Aorta (tissue), 5 donors: ENCODE measurements at regions of chr17 and their contacts with region 1.

Region 1: DNA sequence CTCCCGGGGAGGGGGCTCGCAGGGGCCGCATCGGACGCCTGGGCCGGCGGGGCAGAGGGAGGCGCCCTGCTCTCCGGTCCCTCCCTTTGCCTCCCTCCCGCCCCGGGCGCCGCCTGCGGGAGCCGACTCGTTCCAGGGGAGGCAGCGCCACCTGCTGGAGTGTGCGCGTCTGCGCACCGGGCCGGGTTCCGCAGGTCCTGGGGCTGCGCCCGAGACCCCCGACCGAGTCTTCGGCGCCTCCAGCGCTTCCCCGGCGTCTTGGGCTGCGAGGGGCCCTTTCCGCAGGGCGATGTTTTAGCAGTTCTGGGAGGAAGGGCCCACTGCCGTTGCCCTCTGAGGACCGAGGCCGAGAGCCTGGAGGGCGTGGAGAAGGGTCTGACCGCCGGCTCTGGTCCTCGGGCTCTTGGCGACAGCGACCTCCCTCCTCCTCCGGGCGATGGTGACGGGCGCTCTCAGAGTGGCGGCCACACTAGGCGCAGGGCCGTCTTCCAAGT is 106.3 kb downstream of the SEC14L1 start:
- DNase-seq: peak; percentile 91 to 96
- ATAC-seq: peak; percentile 94
- H3K4me3 ChIP-seq: peak overlapping the region; percentile 15 to 35
- H3K27ac ChIP-seq: no peak overlapping the region
- H3K4me1 ChIP-seq: no peaks in the 10 kb centered on the region
- H3K27me3 ChIP-seq: no peaks in the 10 kb centered on the region

Region 2: GRCh38 chr17:76862494-76862893 is 384.6 kb before region 1 on chr17:
- intact Hi-C with region 1: loop called in 1 of 2 experiments (anchors 5 kb)
- DNase-seq: no peak
- ATAC-seq: no peak
- H3K4me3 ChIP-seq: no peak overlapping the region
- H3K27ac ChIP-seq: no peak overlapping the region
- H3K4me1 ChIP-seq: no peaks in the 10 kb centered on the region
- H3K27me3 ChIP-seq: no peaks in the 10 kb centered on the region

Region 3: DNA sequence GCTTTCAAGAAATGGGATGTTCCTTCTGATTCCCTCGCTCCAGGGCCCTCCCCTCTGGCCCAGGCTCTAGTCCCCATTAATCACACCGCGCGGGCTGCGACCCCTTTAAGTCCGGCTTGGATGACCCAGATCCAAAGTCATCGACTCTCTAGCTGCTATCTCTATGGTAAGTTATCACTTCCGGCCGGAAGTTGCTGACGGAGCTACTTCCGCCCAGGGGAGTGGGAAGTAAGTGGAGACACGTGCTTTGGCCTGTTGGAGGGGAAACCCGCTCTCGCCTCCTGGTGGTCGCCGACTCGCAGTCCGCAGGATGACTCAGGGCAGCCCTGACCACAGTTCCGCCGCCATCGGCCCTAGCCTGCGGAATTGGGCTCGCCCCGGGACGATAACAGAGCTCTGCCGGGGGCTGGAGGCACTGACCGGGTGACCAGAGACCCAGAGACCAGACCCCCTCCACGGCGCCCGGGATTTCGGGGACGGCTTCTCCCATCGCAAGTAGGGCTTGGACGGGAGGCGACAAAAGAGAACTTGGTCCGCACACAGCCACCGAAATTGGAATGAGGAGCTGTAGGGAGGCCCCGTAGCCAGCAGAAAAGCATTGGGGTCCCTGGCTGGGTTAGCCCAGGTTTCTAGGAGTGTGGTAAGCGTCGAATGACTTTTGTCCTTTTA is 158.5 kb before region 1 on chr17:
- intact Hi-C with region 1: loop called (anchors 1 to 2 kb)
- DNase-seq: peak; percentile 96 to 98
- ATAC-seq: peak; percentile 97
- H3K4me3 ChIP-seq: peak overlapping the region; percentile 46 to 72
- H3K27ac ChIP-seq: peak overlapping the region in 1 of 2 donors; percentile 38
- H3K4me1 ChIP-seq: no peaks in the 10 kb centered on the region
- H3K27me3 ChIP-seq: no peaks in the 10 kb centered on the region

Region 4: GRCh38 chr17:77140166-77140878 is 106.8 kb before region 1 on chr17:
- intact Hi-C with region 1: loop called in 1 of 2 experiments (anchors 5 kb)
- DNase-seq: peak; percentile 99 to 100
- ATAC-seq: peak; percentile 99
- H3K4me3 ChIP-seq: peak overlapping the region; percentile 32 to 39
- H3K27ac ChIP-seq: peak overlapping the region in 1 of 2 donors; percentile 69
- H3K4me1 ChIP-seq: no peaks in the 10 kb centered on the region
- H3K27me3 ChIP-seq: no peaks in the 10 kb centered on the region